WTC11 (cell line): ENCODE measurements at regions of chr15 and their contacts with region 1.

Region 1: GRCh38 chr15:82108489-82109078 is 62.8 kb upstream of the MEX3B start:
- DNase-seq: peak; percentile 92
- ATAC-seq: peak; percentile 89
- H3K4me3 Mint-ChIP-seq: no peak overlapping the region
- H3K27ac Mint-ChIP-seq: no peak overlapping the region
- H3K4me1 Mint-ChIP-seq: peaks cover 3% of the 10 kb centered on the region; the same call in 1 of the 2 replicates
- H3K27me3 Mint-ChIP-seq: peaks cover 11% of the 10 kb centered on the region
- CTCF ChIP-seq: peak; percentile 91

Region 2: DNA sequence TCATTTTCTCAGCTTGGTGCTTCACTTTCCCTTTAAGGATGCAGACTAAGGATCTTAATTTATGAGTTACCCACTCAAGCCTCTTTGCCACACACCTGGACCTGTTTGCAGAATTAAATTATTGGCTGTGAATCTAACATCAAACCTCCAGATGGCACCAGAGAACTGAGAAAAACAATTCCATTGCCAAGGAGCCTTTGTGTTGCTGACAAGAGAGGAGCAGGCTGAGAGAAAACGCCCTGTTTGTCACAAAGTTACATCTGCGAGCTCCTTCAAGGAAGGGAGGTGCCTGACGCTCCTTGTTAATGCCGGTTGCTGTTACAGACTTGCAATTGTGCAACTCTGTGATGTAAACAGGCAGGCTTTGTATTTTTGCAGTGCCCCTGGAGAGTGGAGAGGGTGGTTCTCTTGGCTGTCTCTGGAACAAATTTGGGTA is 698.2 kb before region 1 on chr15:
- CTCF ChIA-PET with region 1: interaction called, 16 read pairs
- POLR2A ChIA-PET with region 1: no interaction called
- DNase-seq: peak; percentile 24
- ATAC-seq: peak; percentile 86
- H3K4me3 Mint-ChIP-seq: peak overlapping the region; percentile 14; the same call in 1 of the 2 replicates
- H3K27ac Mint-ChIP-seq: peak overlapping the region; percentile 20; the same call in 1 of the 2 replicates
- H3K4me1 Mint-ChIP-seq: peaks cover 8% of the 10 kb centered on the region
- H3K27me3 Mint-ChIP-seq: no peaks in the 10 kb centered on the region; the same call in 1 of the 2 replicates
- CTCF ChIP-seq: no peak

Region 3: GRCh38 chr15:82072926-82073537 is 35.6 kb before region 1 on chr15:
- CTCF ChIA-PET with region 1: interaction called, 11 read pairs
- POLR2A ChIA-PET with region 1: no interaction called
- DNase-seq: peak; percentile 32
- ATAC-seq: peak; percentile 90
- H3K4me3 Mint-ChIP-seq: no peak overlapping the region
- H3K27ac Mint-ChIP-seq: no peak overlapping the region
- H3K4me1 Mint-ChIP-seq: peaks cover 5% of the 10 kb centered on the region
- H3K27me3 Mint-ChIP-seq: no peaks in the 10 kb centered on the region; the same call in 1 of the 2 replicates
- CTCF ChIP-seq: no peak

Region 4: GRCh38 chr15:82093774-82094211 is 14.8 kb before region 1 on chr15:
- CTCF ChIA-PET with region 1: interaction called, 28 read pairs
- POLR2A ChIA-PET with region 1: no interaction called
- DNase-seq: no peak
- ATAC-seq: no peak
- H3K4me3 Mint-ChIP-seq: no peak overlapping the region
- H3K27ac Mint-ChIP-seq: no peak overlapping the region
- H3K4me1 Mint-ChIP-seq: peaks cover 26% of the 10 kb centered on the region
- H3K27me3 Mint-ChIP-seq: peaks cover 2% of the 10 kb centered on the region; the same call in 1 of the 2 replicates
- CTCF ChIP-seq: no peak

Region 5: GRCh38 chr15:82128401-82129148 is 20.0 kb after region 1 on chr15:
- CTCF ChIA-PET with region 1: interaction called, 23 read pairs
- POLR2A ChIA-PET with region 1: no interaction called
- DNase-seq: no peak
- ATAC-seq: no peak
- H3K4me3 Mint-ChIP-seq: no peak overlapping the region
- H3K27ac Mint-ChIP-seq: no peak overlapping the region
- H3K4me1 Mint-ChIP-seq: no peaks in the 10 kb centered on the region
- H3K27me3 Mint-ChIP-seq: no peaks in the 10 kb centered on the region
- CTCF ChIP-seq: no peak

Region 6: GRCh38 chr15:82197733-82198594 is 89.4 kb after region 1 on chr15:
- CTCF ChIA-PET with region 1: interaction called, 31 read pairs
- POLR2A ChIA-PET with region 1: no interaction called
- DNase-seq: peak; percentile 79
- ATAC-seq: peak; percentile 98
- H3K4me3 Mint-ChIP-seq: no peak overlapping the region
- H3K27ac Mint-ChIP-seq: peak overlapping the region; percentile 77; the same call in 1 of the 2 replicates
- H3K4me1 Mint-ChIP-seq: no peaks in the 10 kb centered on the region
- H3K27me3 Mint-ChIP-seq: no peaks in the 10 kb centered on the region
- CTCF ChIP-seq: peak; percentile 72; the same call in 1 of the 2 replicates